ENCODE measurements at regions of chr16 and their contacts with region 1.

Region 1: DNA sequence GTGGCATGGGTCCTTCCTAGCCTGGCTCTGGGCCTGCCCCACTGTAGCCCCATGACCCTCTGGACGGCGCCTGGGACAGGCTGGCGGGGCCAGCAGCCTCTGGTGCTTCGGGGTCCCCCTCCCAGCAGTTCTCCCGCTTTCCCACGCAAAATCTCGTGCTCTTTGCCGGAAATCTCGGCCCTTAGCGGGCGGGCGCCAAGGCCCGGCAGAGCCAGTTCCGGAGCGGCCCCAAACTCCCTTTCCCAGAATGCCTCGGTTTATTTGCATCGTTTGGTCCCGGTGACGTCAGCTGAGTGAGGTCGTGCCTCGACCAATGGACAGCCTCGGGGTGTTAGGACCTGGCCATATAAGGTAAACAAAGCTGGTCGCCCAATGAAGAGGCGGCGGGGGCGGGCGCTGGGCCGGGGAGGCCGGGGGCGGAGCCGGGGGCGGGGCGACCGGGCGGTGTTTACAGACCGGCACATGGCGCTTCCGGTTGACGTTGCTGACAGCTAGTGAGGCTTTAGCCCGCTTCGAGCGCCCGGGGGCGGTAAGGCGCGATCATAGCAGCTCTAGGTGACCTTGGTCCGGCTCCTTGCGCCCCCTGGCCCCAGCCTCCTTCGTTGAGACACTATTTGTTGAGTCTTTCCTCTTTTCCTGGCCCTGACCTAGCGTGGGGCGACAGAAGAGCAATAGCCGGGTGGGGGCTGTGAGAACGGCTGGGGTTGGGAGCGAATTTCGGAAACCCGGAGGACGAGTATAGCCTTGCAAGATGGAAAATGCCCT is 1.5 kb upstream of the UBALD1 start:
- DNase-seq: peak; percentile 99 to 100 (median 100)
- ATAC-seq: peak; percentile 88 to 93 (median 92)
- H3K4me3 ChIP-seq: peak overlapping the region; percentile 43 to 98 (median 77)
- H3K27ac ChIP-seq: peak overlapping the region; percentile 94 to 99 (median 98)
- H3K4me1 ChIP-seq: peaks cover 4 to 57% (median 37%) of the 10 kb centered on the region in 12 donors
- H3K27me3 ChIP-seq: no peaks in the 10 kb centered on the region
- CTCF ChIP-seq: peak in 10 of 12 donors; percentile 24 to 70 (median 50)
- POLR2A ChIP-seq: peak; percentile 66 to 78

Region 2: DNA sequence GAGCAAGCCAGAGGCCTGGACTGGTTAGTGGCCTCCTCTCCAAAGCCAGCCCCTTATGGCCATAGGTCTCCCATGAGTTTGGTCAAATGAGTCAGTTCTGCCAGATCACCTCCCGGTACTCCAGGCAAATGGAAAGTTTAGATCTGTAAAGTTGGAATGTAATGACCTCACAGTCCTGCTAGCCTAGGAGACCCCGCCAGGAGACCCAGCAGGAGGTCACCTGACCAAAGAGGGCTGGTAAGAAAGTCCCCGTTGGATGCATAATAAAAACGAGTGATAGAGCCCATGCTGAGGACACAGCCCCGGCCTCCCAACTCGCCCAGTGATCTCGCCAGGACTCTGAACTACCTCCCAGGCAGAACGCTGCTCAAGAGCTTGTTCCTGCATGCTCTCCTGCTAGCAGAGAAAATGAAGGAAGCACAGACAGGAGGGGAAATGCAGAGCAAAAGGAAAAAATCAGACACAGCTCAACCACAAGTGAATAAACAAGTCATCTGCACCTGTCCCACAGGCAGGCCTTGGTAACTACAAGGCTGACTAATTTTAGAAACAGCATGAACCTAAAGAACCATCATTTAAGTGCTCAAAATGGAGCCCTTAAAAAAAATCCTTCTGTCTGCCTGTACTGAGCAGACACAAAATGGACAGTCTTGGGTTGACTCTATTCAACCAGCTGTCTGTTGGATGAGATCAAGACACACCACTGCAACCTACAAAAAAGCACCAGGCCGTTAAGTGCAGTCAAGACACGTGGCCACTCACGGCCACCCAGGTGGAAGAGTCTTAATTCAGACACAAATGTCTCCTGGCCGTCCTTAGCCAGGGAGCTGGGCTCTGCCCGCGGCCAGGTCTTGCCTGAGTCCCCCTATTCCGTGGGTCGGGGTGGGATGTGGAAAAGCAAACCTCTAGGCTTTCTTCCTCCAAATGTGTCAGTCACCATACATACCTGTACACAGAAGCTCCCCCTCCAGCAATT is 86.9 kb before region 1 on chr16:
- intact Hi-C with region 1: loop called in 1 of 10 experiments (anchors 5 kb)
- DNase-seq: no peak
- ATAC-seq: peak in 1 of 4 donors; percentile 22
- H3K4me3 ChIP-seq: no peak overlapping the region
- H3K27ac ChIP-seq: peak overlapping the region in 5 of 12 donors; percentile 16 to 40 (median 34)
- H3K4me1 ChIP-seq: peaks cover 5 to 60% (median 31%) of the 10 kb centered on the region in 12 donors
- H3K27me3 ChIP-seq: no peaks in the 10 kb centered on the region
- CTCF ChIP-seq: no peak
- POLR2A ChIP-seq: no peak

Region 3: GRCh38 chr16:4538350-4539235 is 77.6 kb before region 1 on chr16 and contains the start of gene CDIP1:
- intact Hi-C with region 1: loop called in 2 of 10 experiments (anchors 5 kb)
- DNase-seq: peak; percentile 96 to 98 (median 98)
- ATAC-seq: peak; percentile 92 to 97 (median 96)
- H3K4me3 ChIP-seq: peak within 1 kb of the TSS; percentile 69 to 97 (median 86)
- H3K27ac ChIP-seq: peak within 1 kb of the TSS; percentile 70 to 99 (median 92)
- H3K4me1 ChIP-seq: peaks cover 0 to 40% (median 17%) of the 10 kb centered on the region in 12 donors
- H3K27me3 ChIP-seq: no peaks in the 10 kb centered on the region
- CTCF ChIP-seq: peak in 4 of 12 donors; percentile 8 to 28 (median 13)
- POLR2A ChIP-seq: peak; percentile 61 to 92
- total RNA-seq, gene CDIP1: 44.6 to 51.1 (median 46.4) TPM

Region 4: DNA sequence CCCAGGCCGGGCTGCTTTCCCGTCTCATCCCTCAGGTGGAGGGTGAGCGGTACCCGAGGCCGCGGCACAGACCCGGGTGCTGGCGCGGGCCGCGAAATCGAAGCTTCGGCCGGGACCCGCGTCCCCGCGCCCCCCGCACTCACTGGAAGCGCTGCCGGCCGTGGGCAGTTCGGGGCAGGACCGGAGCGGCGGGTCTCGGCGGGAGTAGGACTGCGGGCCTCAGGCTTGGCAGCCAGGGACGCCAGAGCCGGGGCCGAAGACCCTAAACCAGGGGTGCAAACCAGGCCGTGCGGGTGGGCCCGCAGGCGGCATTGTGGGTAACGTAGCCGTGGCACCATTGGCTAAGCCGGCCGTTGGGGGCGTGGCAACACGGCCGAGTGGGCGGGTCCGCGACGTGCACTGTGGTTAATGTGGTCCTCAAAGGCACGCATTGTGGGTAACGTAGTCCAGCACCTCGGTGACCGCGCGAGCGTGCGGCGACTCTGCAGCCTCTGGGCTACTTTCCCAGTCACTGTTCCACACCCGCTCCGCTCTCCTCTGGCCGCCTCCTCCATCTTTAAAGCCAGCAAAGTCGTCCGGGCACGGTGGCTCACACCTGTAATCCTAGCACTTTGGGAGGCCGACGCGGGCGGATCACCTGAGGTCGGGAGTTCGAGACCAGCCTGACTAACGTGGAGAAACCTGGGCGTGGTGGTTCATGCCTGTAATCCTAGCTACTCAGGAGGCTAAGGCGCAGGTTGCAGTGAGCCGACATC is 150.8 kb after region 1 on chr16 and contains the start of gene ZNF500:
- intact Hi-C with region 1: loop called in 1 of 10 experiments (anchors 5 kb)
- DNase-seq: peak; percentile 98 to 99 (median 98)
- ATAC-seq: peak; percentile 92 to 97 (median 96)
- H3K4me3 ChIP-seq: peak within 1 kb of the TSS; percentile 76 to 97 (median 89)
- H3K27ac ChIP-seq: peak within 1 kb of the TSS; percentile 45 to 90 (median 88)
- H3K4me1 ChIP-seq: peaks cover 9 to 37% (median 32%) of the 10 kb centered on the region in 12 donors
- H3K27me3 ChIP-seq: no peaks in the 10 kb centered on the region
- CTCF ChIP-seq: no peak
- POLR2A ChIP-seq: peak in 1 of 2 donors; percentile 82
- total RNA-seq, gene ZNF500: 4.8 to 11.6 (median 6.5) TPM

Region 5: GRCh38 chr16:4802659-4803287 is 186.5 kb after region 1 on chr16:
- intact Hi-C with region 1: no loop called
- DNase-seq: peak; percentile 94 to 96 (median 95)
- ATAC-seq: peak; percentile 89 to 94 (median 92)
- H3K4me3 ChIP-seq: peak overlapping the region; percentile 68 to 96 (median 86)
- H3K27ac ChIP-seq: peak overlapping the region; percentile 47 to 96 (median 90)
- H3K4me1 ChIP-seq: peaks cover 0 to 50% (median 25%) of the 10 kb centered on the region in 12 donors
- H3K27me3 ChIP-seq: no peaks in the 10 kb centered on the region
- CTCF ChIP-seq: peak in 8 of 12 donors; percentile 5 to 53 (median 32)
- POLR2A ChIP-seq: peak in 1 of 2 donors; percentile 53

Measured in heart left ventricle (tissue), 16 donors.